CD8-positive, alpha-beta T cell (primary cell): ENCODE measurements at regions of chr3 and their contacts with region 1.

Region 1: DNA sequence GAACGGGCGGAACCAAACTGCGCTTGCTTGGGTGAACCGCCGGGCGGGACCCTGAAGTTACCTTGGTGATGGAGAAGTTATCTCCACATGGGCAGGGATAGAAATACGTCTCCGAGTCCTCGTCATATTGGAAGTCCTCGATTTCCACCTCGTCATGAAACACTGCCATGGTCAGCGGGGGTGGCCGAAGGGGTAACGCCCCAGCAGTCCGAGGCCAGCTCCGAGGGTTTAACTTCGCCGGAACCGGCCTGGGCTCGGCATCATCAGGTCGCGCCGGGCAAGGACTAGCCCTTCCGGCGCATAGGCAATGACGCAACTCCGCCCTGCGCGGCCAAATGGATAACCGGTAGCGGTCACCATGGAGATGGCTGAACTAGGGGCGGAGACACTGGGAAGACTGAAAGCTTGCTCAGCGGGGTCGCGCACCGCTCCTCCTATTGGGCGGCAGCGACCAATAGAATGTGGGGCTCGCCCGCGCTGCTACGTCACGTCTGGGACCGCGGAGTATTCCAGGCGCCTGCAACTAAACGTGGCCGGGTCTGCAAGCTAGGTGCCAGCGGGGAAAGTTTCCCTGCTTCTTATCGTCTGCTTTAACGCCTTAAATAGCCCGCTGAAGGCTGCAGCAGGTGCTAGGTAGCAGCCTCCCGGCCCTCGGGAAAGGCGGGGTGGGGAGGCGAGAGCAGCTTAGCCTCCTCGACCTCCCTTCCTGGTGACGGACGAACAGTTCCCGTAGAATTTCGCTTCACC is at the starts of genes DPH3 and OXNAD1:
- DNase-seq: peak; percentile 98 to 100 (median 99)
- ATAC-seq: peak; percentile 90
- H3K4me3 ChIP-seq: peak within 1 kb of the TSS; percentile 72 to 97
- H3K4me3 Mint-ChIP-seq: peak within 1 kb of the TSS; percentile 100
- H3K27ac ChIP-seq: peak within 1 kb of the TSS; percentile 92 to 97
- H3K27ac Mint-ChIP-seq: peak within 1 kb of the TSS; percentile 99
- H3K4me1 ChIP-seq: peaks cover 21% of the 10 kb centered on the region
- H3K4me1 Mint-ChIP-seq: peaks cover 44% of the 10 kb centered on the region
- H3K27me3 ChIP-seq: no peaks in the 10 kb centered on the region
- H3K27me3 Mint-ChIP-seq: no peaks in the 10 kb centered on the region
- CTCF ChIP-seq: no peak
- total RNA-seq, gene DPH3: 9.7 to 13.9 TPM
- total RNA-seq, gene OXNAD1: 156 TPM

Region 2: GRCh38 chr3:14651440-14652251 is 1613.2 kb before region 1 on chr3 and contains the start of gene CCDC174:
- CTCF ChIA-PET with region 1: no interaction called
- POLR2A ChIA-PET with region 1: no interaction called
- intact Hi-C with region 1: loop called in 1 of 2 experiments (anchors 5 kb)
- DNase-seq: peak; percentile 89 to 100 (median 93)
- ATAC-seq: peak; percentile 97
- H3K4me3 ChIP-seq: peak within 1 kb of the TSS; percentile 74 to 85
- H3K4me3 Mint-ChIP-seq: peak within 1 kb of the TSS; percentile 98
- H3K27ac ChIP-seq: peak within 1 kb of the TSS; percentile 95 to 97
- H3K27ac Mint-ChIP-seq: peak within 1 kb of the TSS; percentile 99
- H3K4me1 ChIP-seq: peaks cover 31% of the 10 kb centered on the region
- H3K4me1 Mint-ChIP-seq: peaks cover 60% of the 10 kb centered on the region
- H3K27me3 ChIP-seq: no peaks in the 10 kb centered on the region
- H3K27me3 Mint-ChIP-seq: no peaks in the 10 kb centered on the region
- CTCF ChIP-seq: no peak
- total RNA-seq, gene CCDC174: 48.8 to 50.9 TPM

Region 3: GRCh38 chr3:15601397-15602145 is 663.3 kb before region 1 on chr3 and contains the starts of genes BTD and HACL1:
- CTCF ChIA-PET with region 1: no interaction called
- POLR2A ChIA-PET with region 1: interaction called, 4 read pairs
- intact Hi-C with region 1: loop called in 1 of 2 experiments (anchors 2 kb)
- DNase-seq: peak; percentile 96 to 100 (median 99)
- ATAC-seq: peak; percentile 89
- H3K4me3 ChIP-seq: peak within 1 kb of the TSS; percentile 82 to 94
- H3K4me3 Mint-ChIP-seq: peak within 1 kb of the TSS; percentile 100
- H3K27ac ChIP-seq: peak within 1 kb of the TSS; percentile 82 to 88
- H3K27ac Mint-ChIP-seq: peak within 1 kb of the TSS; percentile 99
- H3K4me1 ChIP-seq: peaks cover 19% of the 10 kb centered on the region
- H3K4me1 Mint-ChIP-seq: peaks cover 54% of the 10 kb centered on the region
- H3K27me3 ChIP-seq: no peaks in the 10 kb centered on the region
- H3K27me3 Mint-ChIP-seq: no peaks in the 10 kb centered on the region
- CTCF ChIP-seq: peak; percentile 24
- total RNA-seq, gene BTD: 9.1 to 11.3 TPM
- total RNA-seq, gene HACL1: 30.1 to 33.4 TPM

Region 4: DNA sequence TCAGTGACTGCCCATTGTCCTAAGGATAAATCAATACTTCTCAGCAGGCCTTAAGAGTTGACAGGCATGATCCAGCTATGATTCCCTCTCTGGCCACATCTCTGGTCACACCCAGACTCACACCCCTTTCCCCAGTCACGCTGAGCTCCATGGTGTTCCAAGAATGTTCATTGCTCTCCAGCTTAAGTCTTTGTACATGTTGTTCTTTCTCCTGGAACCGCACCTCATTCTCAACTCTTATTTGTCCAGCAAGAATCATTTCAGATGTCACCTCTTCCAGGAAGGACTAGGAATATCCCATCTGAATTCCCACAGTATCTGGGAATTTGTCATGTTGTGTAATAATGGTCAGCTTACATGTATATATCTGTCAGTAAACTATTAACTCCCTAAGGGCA is 208.7 kb before region 1 on chr3:
- CTCF ChIA-PET with region 1: no interaction called
- POLR2A ChIA-PET with region 1: no interaction called
- intact Hi-C with region 1: no loop called
- DNase-seq: no peak
- ATAC-seq: no peak
- H3K4me3 ChIP-seq: no peak overlapping the region
- H3K4me3 Mint-ChIP-seq: no peak overlapping the region
- H3K27ac ChIP-seq: no peak overlapping the region
- H3K27ac Mint-ChIP-seq: no peak overlapping the region
- H3K4me1 ChIP-seq: no peaks in the 10 kb centered on the region
- H3K4me1 Mint-ChIP-seq: no peaks in the 10 kb centered on the region
- H3K27me3 ChIP-seq: no peaks in the 10 kb centered on the region
- H3K27me3 Mint-ChIP-seq: peaks cover 2% of the 10 kb centered on the region
- CTCF ChIP-seq: no peak

Region 5: DNA sequence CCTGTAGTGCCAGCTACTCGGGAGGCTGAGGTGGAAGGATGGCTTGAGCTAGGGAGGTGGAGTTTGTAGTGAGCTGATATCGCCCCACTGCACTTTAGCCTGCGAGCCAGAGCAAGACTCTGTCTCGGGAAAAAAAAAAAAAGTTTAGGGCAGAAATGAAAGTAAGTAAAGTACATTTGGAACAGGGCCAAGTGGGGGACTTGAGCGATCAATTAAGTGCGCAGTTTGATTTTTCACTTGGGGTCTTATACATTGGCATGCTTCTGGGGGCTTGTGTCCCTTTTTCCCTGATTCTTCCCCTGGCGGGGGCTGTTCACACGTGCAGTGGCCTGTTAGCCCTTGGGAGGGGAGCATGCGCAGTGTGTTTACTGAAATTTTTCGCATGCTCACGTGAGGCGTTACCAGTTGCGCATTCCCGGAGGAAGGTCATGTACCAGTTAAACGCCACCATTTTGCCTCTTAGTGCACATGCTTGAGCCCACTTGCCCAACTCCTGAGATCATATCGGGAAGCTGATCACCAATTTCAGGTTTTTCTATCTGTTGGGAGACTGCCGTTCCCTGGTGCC is 48.4 kb before region 1 on chr3:
- CTCF ChIA-PET with region 1: no interaction called
- POLR2A ChIA-PET with region 1: no interaction called
- intact Hi-C with region 1: no loop called
- DNase-seq: no peak
- ATAC-seq: no peak
- H3K4me3 ChIP-seq: no peak overlapping the region
- H3K4me3 Mint-ChIP-seq: no peak overlapping the region
- H3K27ac ChIP-seq: no peak overlapping the region
- H3K27ac Mint-ChIP-seq: no peak overlapping the region
- H3K4me1 ChIP-seq: no peaks in the 10 kb centered on the region
- H3K4me1 Mint-ChIP-seq: no peaks in the 10 kb centered on the region
- H3K27me3 ChIP-seq: no peaks in the 10 kb centered on the region
- H3K27me3 Mint-ChIP-seq: peaks cover 3% of the 10 kb centered on the region
- CTCF ChIP-seq: no peak

Region 6: GRCh38 chr3:16290007-16290826 is 25.3 kb after region 1 on chr3:
- CTCF ChIA-PET with region 1: interaction called, 88 read pairs
- POLR2A ChIA-PET with region 1: interaction called, 13 read pairs
- intact Hi-C with region 1: loop called (anchors 1 kb)
- DNase-seq: peak in 7 of 9 experiments; percentile 38 to 78 (median 62)
- ATAC-seq: peak; percentile 7
- H3K4me3 ChIP-seq: peak overlapping the region; percentile 70 to 71
- H3K4me3 Mint-ChIP-seq: peak overlapping the region; percentile 91
- H3K27ac ChIP-seq: peak overlapping the region; percentile 81 to 86
- H3K27ac Mint-ChIP-seq: peak overlapping the region; percentile 95
- H3K4me1 ChIP-seq: peaks cover 39% of the 10 kb centered on the region
- H3K4me1 Mint-ChIP-seq: peaks cover 71% of the 10 kb centered on the region
- H3K27me3 ChIP-seq: no peaks in the 10 kb centered on the region
- H3K27me3 Mint-ChIP-seq: no peaks in the 10 kb centered on the region
- CTCF ChIP-seq: peak; percentile 98

Region 7: GRCh38 chr3:16319307-16319706 is 54.4 kb after region 1 on chr3:
- CTCF ChIA-PET with region 1: interaction called, 66 read pairs
- POLR2A ChIA-PET with region 1: interaction called, 17 read pairs
- intact Hi-C with region 1: loop called (anchors 1 kb)
- DNase-seq: peak; percentile 56 to 89 (median 82)
- ATAC-seq: peak; percentile 77
- H3K4me3 ChIP-seq: no peak overlapping the region
- H3K4me3 Mint-ChIP-seq: no peak overlapping the region
- H3K27ac ChIP-seq: peak overlapping the region in 1 of 2 experiments; percentile 62
- H3K27ac Mint-ChIP-seq: peak overlapping the region; percentile 95
- H3K4me1 ChIP-seq: peaks cover 65% of the 10 kb centered on the region
- H3K4me1 Mint-ChIP-seq: peaks cover 85% of the 10 kb centered on the region
- H3K27me3 ChIP-seq: no peaks in the 10 kb centered on the region
- H3K27me3 Mint-ChIP-seq: no peaks in the 10 kb centered on the region
- CTCF ChIP-seq: peak; percentile 66

Region 8: GRCh38 chr3:16550676-16551341 is 285.9 kb after region 1 on chr3:
- CTCF ChIA-PET with region 1: interaction called, 64 read pairs
- POLR2A ChIA-PET with region 1: interaction called, 6 read pairs
- intact Hi-C with region 1: loop called (anchors 1 kb)
- DNase-seq: peak; percentile 51 to 89 (median 73)
- ATAC-seq: peak; percentile 100
- H3K4me3 ChIP-seq: no peak overlapping the region
- H3K4me3 Mint-ChIP-seq: no peak overlapping the region
- H3K27ac ChIP-seq: no peak overlapping the region
- H3K27ac Mint-ChIP-seq: peak overlapping the region; percentile 60
- H3K4me1 ChIP-seq: no peaks in the 10 kb centered on the region
- H3K4me1 Mint-ChIP-seq: peaks cover 3% of the 10 kb centered on the region
- H3K27me3 ChIP-seq: no peaks in the 10 kb centered on the region
- H3K27me3 Mint-ChIP-seq: no peaks in the 10 kb centered on the region
- CTCF ChIP-seq: peak; percentile 87

Region 9: GRCh38 chr3:17023006-17023664 is 758.3 kb after region 1 on chr3:
- CTCF ChIA-PET with region 1: no interaction called
- POLR2A ChIA-PET with region 1: no interaction called
- intact Hi-C with region 1: loop called in 1 of 2 experiments (anchors 10 kb)
- DNase-seq: peak in 8 of 9 experiments; percentile 29 to 88 (median 60)
- ATAC-seq: peak; percentile 95
- H3K4me3 ChIP-seq: no peak overlapping the region
- H3K4me3 Mint-ChIP-seq: peak overlapping the region; percentile 55
- H3K27ac ChIP-seq: peak overlapping the region in 1 of 2 experiments; percentile 51
- H3K27ac Mint-ChIP-seq: peak overlapping the region; percentile 90
- H3K4me1 ChIP-seq: peaks cover 30% of the 10 kb centered on the region
- H3K4me1 Mint-ChIP-seq: peaks cover 70% of the 10 kb centered on the region
- H3K27me3 ChIP-seq: no peaks in the 10 kb centered on the region
- H3K27me3 Mint-ChIP-seq: no peaks in the 10 kb centered on the region
- CTCF ChIP-seq: no peak